ENCODE measurements at regions of chr12 and their contacts with region 1.

Region 1: DNA sequence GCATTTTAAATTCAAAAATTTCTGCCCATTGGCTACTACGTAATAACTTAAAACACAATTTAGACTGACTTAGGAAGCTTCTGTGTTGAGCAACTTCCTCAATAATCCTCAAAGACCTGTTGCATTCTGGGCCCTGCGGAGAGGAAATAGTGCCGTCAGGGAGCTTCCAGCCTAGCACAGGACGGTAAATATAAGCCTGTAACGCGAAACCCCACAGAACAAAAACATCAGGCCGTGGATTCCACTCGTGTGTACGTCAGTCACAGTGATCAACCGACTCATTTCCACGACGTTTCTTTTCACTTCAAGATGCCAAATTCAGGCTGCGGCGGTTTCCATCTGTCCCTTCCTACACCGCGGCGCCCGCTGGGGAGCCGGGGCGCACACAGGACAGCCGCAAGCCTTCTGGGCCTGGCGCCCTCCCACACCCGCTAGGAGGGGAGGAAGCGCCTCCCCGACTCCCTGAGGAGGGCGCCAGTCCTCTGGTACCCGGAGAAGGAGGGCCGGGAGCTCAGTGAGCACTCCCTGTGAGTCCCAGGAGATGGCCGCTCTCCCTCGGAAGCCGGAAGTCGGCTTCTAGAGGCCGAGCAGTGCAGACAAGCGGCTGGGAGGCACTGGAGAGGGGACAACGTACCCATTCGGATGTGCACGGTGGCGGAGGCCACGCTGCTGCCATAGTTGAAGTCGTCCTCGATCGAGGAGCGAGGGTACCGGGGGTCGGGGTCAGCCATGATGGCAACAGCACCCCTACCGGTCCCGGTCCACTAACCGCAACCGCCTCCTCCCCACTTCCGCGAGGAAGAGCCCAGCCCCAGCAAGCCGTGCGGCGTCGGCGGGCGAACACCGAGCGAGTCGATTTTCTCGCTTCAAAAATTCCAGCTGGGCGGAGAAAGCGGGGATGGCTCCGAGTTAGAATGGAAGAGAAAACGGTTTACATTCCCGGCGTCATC is at the start of gene TMBIM4:
- DNase-seq: peak; percentile 93 to 96
- ATAC-seq: peak; percentile 98
- H3K4me3 ChIP-seq: peak within 1 kb of the TSS; percentile 62 to 68
- H3K27ac ChIP-seq: peak within 1 kb of the TSS; percentile 96 to 100
- H3K4me1 ChIP-seq: peaks cover 0 to 1% of the 10 kb centered on the region in 2 donors
- H3K27me3 ChIP-seq: no peaks in the 10 kb centered on the region
- total RNA-seq, gene TMBIM4: 100 to 112 TPM

Region 2: GRCh38 chr12:66080791-66081190 is 88.7 kb before region 1 on chr12:
- intact Hi-C with region 1: no loop called
- DNase-seq: no peak
- ATAC-seq: no peak
- H3K4me3 ChIP-seq: no peak overlapping the region
- H3K27ac ChIP-seq: no peak overlapping the region
- H3K4me1 ChIP-seq: no peaks in the 10 kb centered on the region
- H3K27me3 ChIP-seq: no peaks in the 10 kb centered on the region

Region 3: GRCh38 chr12:66130277-66131066 is 39.0 kb before region 1 on chr12 and contains the start of gene LLPH:
- intact Hi-C with region 1: loop called (anchors 1 to 5 kb)
- DNase-seq: peak; percentile 95 to 96
- ATAC-seq: peak; percentile 97
- H3K4me3 ChIP-seq: peak within 1 kb of the TSS; percentile 61 to 96
- H3K27ac ChIP-seq: no peak within 1 kb of the TSS
- H3K4me1 ChIP-seq: peaks cover 2 to 6% of the 10 kb centered on the region in 2 donors
- H3K27me3 ChIP-seq: no peaks in the 10 kb centered on the region
- total RNA-seq, gene LLPH: 16.1 to 19.0 TPM

Region 4: DNA sequence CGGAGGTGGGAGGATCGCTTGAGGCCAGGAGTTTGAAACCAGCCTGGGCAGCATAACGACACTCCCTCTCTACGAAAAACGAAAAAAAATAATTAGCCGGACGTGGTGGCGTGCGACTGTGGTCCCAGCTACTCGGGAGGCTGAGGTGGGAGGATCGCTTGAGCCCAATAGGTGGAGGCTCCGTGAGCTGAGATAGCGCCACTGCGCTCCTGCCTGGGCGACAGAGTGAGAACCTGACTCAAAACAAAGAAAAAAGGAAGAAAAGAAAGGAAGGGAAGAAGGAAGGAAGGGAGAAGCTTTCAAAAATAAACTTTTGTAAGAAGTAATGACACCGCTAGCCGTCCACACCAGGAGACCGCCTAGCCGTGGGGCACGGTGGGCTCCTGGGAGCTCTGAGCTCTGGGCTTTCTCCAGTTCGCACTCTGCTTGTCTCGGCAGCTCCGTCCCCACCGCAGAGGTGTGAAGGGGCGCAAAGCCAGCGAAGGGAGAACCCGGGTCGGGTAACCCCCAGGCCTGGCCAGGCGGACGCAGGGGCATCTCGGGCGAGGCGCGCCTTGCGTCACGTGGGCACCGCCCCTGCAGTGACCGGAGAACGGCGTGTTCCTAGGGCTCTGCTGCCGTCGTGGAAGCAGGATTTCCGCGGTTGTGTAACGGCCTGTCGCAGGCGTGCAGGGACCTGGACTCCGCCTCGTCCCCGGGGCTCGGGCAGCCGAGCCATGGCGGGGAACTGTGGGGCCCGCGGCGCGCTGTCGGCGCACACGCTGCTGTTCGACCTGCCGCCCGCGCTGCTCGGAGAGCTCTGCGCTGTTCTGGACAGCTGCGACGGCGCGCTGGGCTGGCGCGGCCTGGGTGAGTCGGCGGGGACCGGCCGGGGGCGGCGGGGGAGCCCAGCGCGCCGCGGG is 19.3 kb after region 1 on chr12 and contains the start of gene IRAK3:
- intact Hi-C with region 1: loop called in 1 of 2 experiments (anchors 1 kb)
- DNase-seq: peak; percentile 90 to 95
- ATAC-seq: peak; percentile 96
- H3K4me3 ChIP-seq: peak within 1 kb of the TSS; percentile 68 to 85
- H3K27ac ChIP-seq: peak within 1 kb of the TSS; percentile 23 to 58
- H3K4me1 ChIP-seq: no peaks in the 10 kb centered on the region
- H3K27me3 ChIP-seq: no peaks in the 10 kb centered on the region
- total RNA-seq, gene IRAK3: 29.7 to 32.2 TPM

Region 5: DNA sequence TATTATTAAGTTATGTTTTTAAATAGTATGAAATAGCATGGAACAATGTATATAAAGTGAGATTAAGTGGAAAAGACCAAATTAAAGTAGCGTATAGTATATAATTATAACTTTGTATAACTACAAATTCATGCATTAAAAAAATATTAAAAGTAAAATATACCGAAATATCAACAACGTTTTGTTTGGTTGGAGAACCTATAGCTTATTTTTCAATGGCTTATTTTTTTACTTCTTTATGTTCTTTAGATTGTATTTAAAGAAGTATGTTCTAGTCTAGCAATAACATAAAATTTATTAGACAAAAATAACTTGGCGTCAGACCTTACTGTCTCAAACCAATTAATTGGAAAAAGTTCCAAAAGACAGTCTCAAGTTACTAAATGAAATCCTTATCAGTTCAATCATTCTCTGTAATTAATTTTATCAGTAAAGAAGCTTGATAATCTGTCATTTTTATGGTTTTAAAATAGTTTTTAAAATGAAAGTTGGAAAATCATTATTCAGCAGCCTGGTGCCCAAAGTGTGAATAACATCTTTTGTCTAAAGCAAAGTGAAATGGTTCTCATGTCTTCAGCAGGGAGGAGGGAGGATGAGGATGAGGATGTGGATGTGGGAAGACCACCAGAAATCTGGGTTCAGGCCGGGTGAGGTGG is 66.3 kb after region 1 on chr12:
- intact Hi-C with region 1: loop called in 1 of 2 experiments (anchors 10 kb)
- DNase-seq: no peak
- ATAC-seq: no peak
- H3K4me3 ChIP-seq: peak overlapping the region; percentile 59 to 85
- H3K27ac ChIP-seq: no peak overlapping the region
- H3K4me1 ChIP-seq: no peaks in the 10 kb centered on the region
- H3K27me3 ChIP-seq: no peaks in the 10 kb centered on the region

Region 6: DNA sequence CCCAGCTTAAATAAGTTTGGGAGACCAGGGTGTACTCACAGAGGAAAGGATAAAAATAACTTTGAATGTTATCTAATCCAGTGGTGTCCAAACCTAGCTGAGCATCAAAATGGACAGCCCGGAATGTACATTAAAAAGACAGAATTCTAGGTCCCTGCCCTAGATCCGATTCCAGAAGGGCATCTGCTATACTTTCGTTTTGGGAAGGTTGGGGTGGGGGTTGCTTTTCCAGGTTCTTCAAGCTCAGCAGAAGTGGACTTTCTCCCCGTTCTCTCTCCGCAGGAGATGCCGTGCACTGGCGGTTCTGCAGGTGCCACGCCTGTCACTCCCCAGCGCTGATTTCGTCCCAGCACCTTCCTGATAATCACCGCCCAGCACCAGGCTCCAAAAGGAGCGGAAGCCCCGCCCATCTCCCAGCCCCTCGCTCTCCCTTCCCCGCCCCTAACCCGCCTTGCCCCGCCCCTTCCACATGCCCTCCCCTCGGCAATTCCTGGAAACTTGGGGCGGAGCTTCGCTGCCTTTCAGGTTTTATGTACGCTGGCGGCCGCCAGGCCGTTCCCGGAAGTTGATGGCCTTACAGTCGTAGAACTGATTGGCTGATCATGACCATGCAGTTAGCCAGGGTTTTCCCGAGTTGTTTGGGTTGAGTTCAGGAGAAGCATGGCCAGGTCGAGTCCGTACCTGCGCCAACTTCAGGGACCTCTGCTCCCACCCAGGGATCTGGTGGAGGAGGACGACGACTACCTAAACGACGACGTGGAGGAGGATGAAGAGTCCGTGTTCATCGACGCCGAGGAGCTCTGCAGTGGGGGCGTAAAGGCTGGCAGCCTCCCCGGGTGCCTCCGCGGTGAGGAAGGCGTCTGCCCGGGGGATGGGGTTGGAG is 132.7 kb after region 1 on chr12 and contains the start of gene HELB:
- intact Hi-C with region 1: loop called in 1 of 2 experiments (anchors 5 kb)
- DNase-seq: peak; percentile 99 to 100
- ATAC-seq: peak; percentile 100
- H3K4me3 ChIP-seq: peak within 1 kb of the TSS; percentile 80 to 95
- H3K27ac ChIP-seq: peak within 1 kb of the TSS in 1 of 2 donors; percentile 9
- H3K4me1 ChIP-seq: peaks cover 2 to 4% of the 10 kb centered on the region in 2 donors
- H3K27me3 ChIP-seq: no peaks in the 10 kb centered on the region
- total RNA-seq, gene HELB: 2.5 to 9.9 TPM

Measured in aorta (tissue), 5 donors.